ENCODE measurements at regions of chr12 and their contacts with region 1.

Region 1: DNA sequence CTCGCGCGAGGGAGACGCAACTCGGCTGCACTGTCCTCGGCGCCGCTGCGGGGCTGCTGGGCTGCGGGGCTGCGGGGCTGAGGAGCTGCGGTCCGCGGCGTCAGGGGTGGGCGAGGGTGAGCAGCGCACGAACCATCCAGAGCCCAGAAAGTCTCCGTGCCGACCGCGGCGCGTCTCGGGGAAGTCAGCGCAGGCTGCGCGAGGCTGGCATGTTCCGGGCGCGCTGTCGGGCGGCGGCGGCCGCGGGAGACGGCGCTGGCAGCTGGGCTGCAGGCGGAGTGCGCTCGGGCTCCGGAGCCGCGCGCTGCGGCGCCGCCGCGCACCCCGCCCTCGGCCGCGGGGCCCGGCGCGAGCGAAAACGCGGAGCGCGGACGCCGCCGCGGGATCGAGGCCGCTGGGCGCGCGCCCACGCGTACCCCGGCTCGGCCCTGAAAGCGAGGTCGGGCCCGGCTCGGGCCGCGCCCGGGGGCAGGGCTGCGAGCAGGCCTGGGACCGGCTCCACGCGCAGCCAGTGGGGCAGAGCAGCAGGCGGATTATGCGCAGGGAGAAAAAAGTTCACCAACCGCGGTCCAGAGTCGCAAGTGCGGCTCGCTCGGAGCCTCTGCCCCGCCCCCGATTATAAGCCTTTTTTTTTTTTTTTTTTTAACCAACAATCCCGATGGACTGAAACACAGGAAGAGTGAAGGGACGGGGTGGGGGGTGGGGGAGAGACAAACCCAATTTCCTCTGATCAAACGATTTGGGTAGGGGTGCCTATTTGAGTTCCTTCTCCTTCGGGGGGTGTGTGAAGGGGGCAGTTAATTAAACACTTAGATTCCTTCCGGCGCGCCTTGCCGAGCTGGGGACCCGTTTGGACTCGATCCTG is at the start of gene PRICKLE1:
- DNase-seq: peak; percentile 59 to 84 (median 80)
- ATAC-seq: peak; percentile 86 to 88
- H3K4me3 ChIP-seq: peak within 1 kb of the TSS; percentile 59
- H3K27ac ChIP-seq: peak within 1 kb of the TSS; percentile 57
- H3K4me1 ChIP-seq: peaks cover 5% of the 10 kb centered on the region
- H3K27me3 ChIP-seq: no peaks in the 10 kb centered on the region
- total RNA-seq, gene PRICKLE1: 21.9 to 27.2 (median 25.3) TPM

Region 2: GRCh38 chr12:41962171-41962572 is 627.5 kb before region 1 on chr12:
- intact Hi-C with region 1: no loop called
- DNase-seq: peak; percentile 18 to 79 (median 69)
- ATAC-seq: peak; percentile 39 to 76
- H3K4me3 ChIP-seq: no peak overlapping the region
- H3K27ac ChIP-seq: no peak overlapping the region
- H3K4me1 ChIP-seq: no peaks in the 10 kb centered on the region
- H3K27me3 ChIP-seq: no peaks in the 10 kb centered on the region

Region 3: GRCh38 chr12:42504049-42504448 is 85.6 kb before region 1 on chr12:
- intact Hi-C with region 1: no loop called
- DNase-seq: no peak
- ATAC-seq: peak in 1 of 2 donors; percentile 42
- H3K4me3 ChIP-seq: no peak overlapping the region
- H3K27ac ChIP-seq: no peak overlapping the region
- H3K4me1 ChIP-seq: no peaks in the 10 kb centered on the region
- H3K27me3 ChIP-seq: no peaks in the 10 kb centered on the region

Region 4: DNA sequence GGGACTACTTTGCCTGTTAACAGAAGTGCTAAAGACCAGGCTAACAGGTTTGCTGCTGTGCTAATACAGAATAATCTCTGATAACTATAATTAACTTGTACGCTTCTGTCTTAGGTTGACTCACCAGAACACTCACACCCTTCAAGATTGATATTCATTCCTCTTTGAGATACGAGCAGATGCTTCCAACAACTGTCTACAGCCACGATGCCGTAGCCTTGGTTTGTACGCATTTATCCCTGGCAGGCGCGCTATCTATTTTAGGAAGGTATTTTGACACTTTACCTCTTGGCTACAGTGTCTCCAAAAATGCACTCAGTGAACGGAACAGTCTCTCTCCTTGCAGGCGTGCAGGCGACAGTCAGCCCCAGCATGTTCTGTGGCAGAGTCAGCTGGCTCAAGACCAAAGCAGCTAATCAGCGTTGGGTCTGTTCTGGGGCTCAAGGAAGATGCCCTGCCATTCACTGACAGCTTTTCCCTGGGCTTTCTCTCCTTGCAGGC is 146.2 kb after region 1 on chr12:
- intact Hi-C with region 1: loop called in 1 of 4 experiments (anchors 2 kb)
- DNase-seq: peak; percentile 68 to 84 (median 84)
- ATAC-seq: peak; percentile 94
- H3K4me3 ChIP-seq: peak overlapping the region; percentile 22
- H3K27ac ChIP-seq: peak overlapping the region; percentile 57
- H3K4me1 ChIP-seq: peaks cover 2% of the 10 kb centered on the region
- H3K27me3 ChIP-seq: no peaks in the 10 kb centered on the region

Region 5: GRCh38 chr12:42790761-42791151 is 201.1 kb after region 1 on chr12:
- intact Hi-C with region 1: loop called in 1 of 4 experiments (anchors 10 kb)
- DNase-seq: peak in 1 of 3 donors; percentile 17
- ATAC-seq: peak; percentile 47 to 83
- H3K4me3 ChIP-seq: no peak overlapping the region
- H3K27ac ChIP-seq: no peak overlapping the region
- H3K4me1 ChIP-seq: peaks cover 7% of the 10 kb centered on the region
- H3K27me3 ChIP-seq: no peaks in the 10 kb centered on the region

Region 6: DNA sequence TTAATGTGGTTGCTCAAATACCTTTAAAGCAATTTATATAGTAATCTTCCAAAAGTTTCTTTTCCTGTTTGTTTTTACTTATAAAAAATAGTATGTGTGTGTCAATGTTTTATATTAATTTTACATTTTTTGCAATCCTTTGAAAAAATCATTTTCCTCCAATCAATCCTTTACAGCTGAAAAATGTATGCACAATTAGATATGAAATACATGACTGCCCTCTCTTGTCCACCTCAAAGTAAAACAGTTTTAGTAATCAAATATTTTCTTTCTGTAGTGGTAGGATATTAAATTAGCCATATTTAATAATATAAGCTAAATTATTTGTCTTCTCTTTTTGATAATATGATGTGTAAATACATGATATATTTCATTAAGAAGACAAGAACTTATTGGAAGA is 692.4 kb after region 1 on chr12:
- intact Hi-C with region 1: loop called in 3 of 4 experiments (anchors 10 kb)
- DNase-seq: no peak
- ATAC-seq: no peak
- H3K4me3 ChIP-seq: no peak overlapping the region
- H3K27ac ChIP-seq: no peak overlapping the region
- H3K4me1 ChIP-seq: no peaks in the 10 kb centered on the region
- H3K27me3 ChIP-seq: no peaks in the 10 kb centered on the region